Right cardiac atrium (tissue), 5 donors: ENCODE measurements at regions of chr6 and their contacts with region 1.

Region 1: GRCh38 chr6:30742316-30743098 is at the start of gene FLOT1:
- DNase-seq: peak; percentile 98 to 99 (median 99)
- ATAC-seq: peak; percentile 93 to 94
- H3K4me3 ChIP-seq: peak within 1 kb of the TSS; percentile 89
- H3K27ac ChIP-seq: peak within 1 kb of the TSS; percentile 96
- H3K4me1 ChIP-seq: peaks cover 2% of the 10 kb centered on the region
- H3K27me3 ChIP-seq: no peaks in the 10 kb centered on the region
- total RNA-seq, gene FLOT1: 180 to 208 (median 199) TPM

Region 2: DNA sequence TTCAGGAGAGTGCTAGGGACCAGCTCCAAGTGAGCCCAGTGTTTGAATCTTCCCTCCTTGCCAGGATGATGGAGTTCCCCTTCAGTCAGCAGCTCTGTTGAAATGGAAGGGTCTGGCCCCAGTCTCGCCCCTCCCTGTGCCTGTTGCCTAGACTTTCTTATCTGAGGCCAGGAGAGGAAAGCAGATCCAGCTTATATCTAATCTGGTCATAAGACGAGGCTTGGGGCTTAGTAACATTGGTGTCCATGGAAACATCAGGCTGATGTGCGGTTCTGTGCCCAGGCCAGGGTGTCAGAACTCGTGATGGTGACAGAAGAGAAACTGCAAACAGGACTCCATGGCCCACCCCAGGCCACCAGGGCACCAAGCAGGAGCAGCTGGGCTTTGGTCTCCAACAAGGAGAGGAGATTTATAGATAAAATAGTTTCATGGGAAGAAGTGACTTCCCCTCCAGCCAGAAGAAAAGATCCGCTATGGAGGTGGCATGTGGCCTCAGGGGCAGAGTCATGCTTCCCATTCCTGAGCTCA is 1264.5 kb before region 1 on chr6:
- intact Hi-C with region 1: no loop called
- DNase-seq: no peak
- ATAC-seq: no peak
- H3K4me3 ChIP-seq: no peak overlapping the region
- H3K27ac ChIP-seq: no peak overlapping the region
- H3K4me1 ChIP-seq: no peaks in the 10 kb centered on the region
- H3K27me3 ChIP-seq: no peaks in the 10 kb centered on the region

Region 3: DNA sequence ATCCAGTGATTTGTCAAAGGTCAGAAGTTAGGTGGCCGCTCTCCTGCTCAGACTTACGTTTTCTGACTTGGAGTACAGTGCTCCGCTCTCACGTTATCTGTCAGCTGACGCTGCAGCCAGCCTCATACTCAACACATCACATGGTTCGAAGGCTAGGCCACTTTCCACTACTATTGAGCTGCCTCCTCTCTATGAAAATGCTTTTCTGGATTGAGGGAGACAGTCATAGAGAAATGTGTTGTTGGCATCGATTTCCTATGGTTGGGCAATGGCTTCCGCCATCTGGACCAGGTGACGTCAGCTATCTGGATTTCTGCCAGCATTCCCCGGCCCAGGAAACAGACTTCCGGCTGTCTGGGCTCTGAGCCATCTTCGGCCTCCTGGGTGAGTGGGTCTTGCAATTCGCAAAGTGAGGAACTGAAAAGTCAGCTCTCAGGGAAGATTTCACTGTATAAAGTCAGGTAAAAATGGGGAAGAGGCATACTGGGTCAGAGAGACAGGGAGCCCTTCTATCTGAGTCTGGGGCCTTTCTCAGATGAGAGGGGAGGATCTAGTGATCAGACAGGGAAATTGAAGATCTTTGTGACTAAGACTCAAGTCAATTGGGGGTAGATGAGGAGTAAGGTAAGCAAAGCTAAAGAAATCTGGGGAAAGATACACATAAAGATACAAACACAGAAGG is 39.4 kb after region 1 on chr6:
- intact Hi-C with region 1: loop called in 2 of 4 experiments (anchors 5 kb)
- DNase-seq: peak; percentile 97 to 98 (median 98)
- ATAC-seq: peak; percentile 91 to 92
- H3K4me3 ChIP-seq: no peak overlapping the region
- H3K27ac ChIP-seq: peak overlapping the region; percentile 86
- H3K4me1 ChIP-seq: peaks cover 22% of the 10 kb centered on the region
- H3K27me3 ChIP-seq: no peaks in the 10 kb centered on the region

Region 4: GRCh38 chr6:30814136-30815040 is 71.9 kb after region 1 on chr6:
- intact Hi-C with region 1: loop called in 1 of 4 experiments (anchors 10 kb)
- DNase-seq: no peak
- ATAC-seq: peak in 1 of 2 donors; percentile 46
- H3K4me3 ChIP-seq: no peak overlapping the region
- H3K27ac ChIP-seq: peak overlapping the region; percentile 6
- H3K4me1 ChIP-seq: peaks cover 2% of the 10 kb centered on the region
- H3K27me3 ChIP-seq: no peaks in the 10 kb centered on the region

Region 5: GRCh38 chr6:30821862-30822782 is 79.6 kb after region 1 on chr6:
- intact Hi-C with region 1: loop called (anchors 2 to 10 kb)
- DNase-seq: no peak
- ATAC-seq: no peak
- H3K4me3 ChIP-seq: no peak overlapping the region
- H3K27ac ChIP-seq: peak overlapping the region; percentile 48
- H3K4me1 ChIP-seq: peaks cover 8% of the 10 kb centered on the region
- H3K27me3 ChIP-seq: no peaks in the 10 kb centered on the region

Region 6: GRCh38 chr6:30883685-30884520 is 141.4 kb after region 1 on chr6 and contains the start of gene DDR1:
- intact Hi-C with region 1: loop called in 3 of 4 experiments (anchors 5 to 10 kb)
- DNase-seq: peak; percentile 79 to 95 (median 94)
- ATAC-seq: peak; percentile 75 to 82
- H3K4me3 ChIP-seq: peak within 1 kb of the TSS; percentile 92
- H3K27ac ChIP-seq: peak within 1 kb of the TSS; percentile 78
- H3K4me1 ChIP-seq: peaks cover 22% of the 10 kb centered on the region
- H3K27me3 ChIP-seq: no peaks in the 10 kb centered on the region
- total RNA-seq, gene DDR1: 96.2 to 120 (median 100) TPM

Region 7: GRCh38 chr6:30914076-30914853 is 171.8 kb after region 1 on chr6 and contains the start of gene VARS2:
- intact Hi-C with region 1: loop called in 1 of 4 experiments (anchors 10 kb)
- DNase-seq: peak; percentile 89 to 97 (median 96)
- ATAC-seq: peak; percentile 97
- H3K4me3 ChIP-seq: peak within 1 kb of the TSS; percentile 37
- H3K27ac ChIP-seq: peak within 1 kb of the TSS; percentile 76
- H3K4me1 ChIP-seq: peaks cover 2% of the 10 kb centered on the region
- H3K27me3 ChIP-seq: no peaks in the 10 kb centered on the region
- total RNA-seq, gene VARS2: 14.8 to 20.8 (median 16.9) TPM